Colonic mucosa (tissue), 4 donors: ENCODE measurements at regions of chr16 and their contacts with region 1.

Region 1: DNA sequence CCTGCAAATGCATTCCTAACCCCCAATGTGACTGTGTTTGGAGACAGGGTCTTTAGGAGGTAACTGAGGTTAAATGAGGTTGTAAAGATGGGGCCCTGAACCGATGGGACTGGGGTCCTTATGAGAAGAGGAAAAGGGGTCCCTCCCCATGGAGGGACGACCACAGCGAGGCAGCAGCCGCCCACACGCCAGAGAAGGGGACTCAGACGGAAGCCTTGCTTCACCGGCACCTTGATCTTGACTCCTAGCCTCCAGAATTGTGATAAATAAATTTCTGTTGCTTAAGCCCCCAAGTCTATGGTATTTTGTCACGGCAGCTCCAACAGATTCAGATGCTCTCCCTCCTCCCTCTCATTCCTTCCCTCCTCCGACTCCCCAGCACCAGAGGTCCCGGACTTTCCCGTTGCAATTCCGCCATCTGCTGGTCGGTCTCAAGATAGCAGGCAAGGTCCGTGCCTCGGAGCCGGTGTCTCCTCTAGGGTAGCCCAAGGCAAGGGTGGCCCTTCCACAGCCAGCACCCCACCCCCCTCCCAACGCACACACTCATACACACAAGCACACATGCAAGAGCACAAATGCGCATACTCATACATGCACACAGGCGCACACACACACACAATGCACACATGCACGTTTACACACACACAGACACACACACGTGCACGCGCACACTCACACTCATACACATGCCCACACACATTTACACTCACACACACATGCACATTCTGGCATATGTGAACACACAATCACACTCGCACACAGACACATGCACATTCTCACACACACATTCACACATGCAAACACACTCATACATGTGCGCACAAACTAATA is 23.1 kb upstream of the C16orf78 start:
- DNase-seq: peak; percentile 75
- H3K4me3 ChIP-seq: no peak overlapping the region
- H3K27ac ChIP-seq: no peak overlapping the region
- H3K4me1 ChIP-seq: no peaks in the 10 kb centered on the region
- H3K27me3 ChIP-seq: no peaks in the 10 kb centered on the region
- CTCF ChIP-seq: peak; percentile 71

Region 2: DNA sequence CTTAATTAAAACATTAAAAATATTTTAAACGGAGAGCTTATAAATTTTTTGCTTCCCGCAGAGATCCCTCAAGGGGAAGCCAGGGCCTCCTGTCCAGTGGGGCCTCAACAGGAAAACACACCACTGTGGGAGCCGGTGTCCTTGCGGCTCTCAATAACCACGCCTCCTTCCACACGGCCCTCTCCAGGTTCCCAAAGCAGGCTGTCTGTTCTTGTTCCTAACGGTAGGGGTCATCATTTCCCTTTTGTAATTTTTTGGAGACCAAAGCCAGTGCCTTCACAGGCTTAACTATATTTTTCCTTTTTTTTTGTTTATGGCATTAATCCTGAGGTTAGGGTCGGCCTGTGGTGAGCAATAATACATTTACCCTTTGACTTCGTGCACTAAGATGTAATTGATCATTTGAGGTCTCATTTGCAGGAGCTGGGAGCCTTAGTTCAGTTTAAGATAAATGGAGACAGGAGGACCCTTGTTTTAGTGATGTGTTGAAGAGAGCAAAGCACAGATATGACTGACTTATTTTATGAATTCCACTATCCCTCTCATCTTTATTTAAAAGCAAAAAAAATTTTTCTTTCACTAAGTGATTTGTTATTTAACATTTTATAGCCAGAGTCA is 663.0 kb before region 1 on chr16:
- intact Hi-C with region 1: loop called (anchors 2 kb)
- DNase-seq: peak; percentile 42
- H3K4me3 ChIP-seq: no peak overlapping the region
- H3K27ac ChIP-seq: no peak overlapping the region
- H3K4me1 ChIP-seq: no peaks in the 10 kb centered on the region
- H3K27me3 ChIP-seq: no peaks in the 10 kb centered on the region
- CTCF ChIP-seq: peak; percentile 59

Region 3: DNA sequence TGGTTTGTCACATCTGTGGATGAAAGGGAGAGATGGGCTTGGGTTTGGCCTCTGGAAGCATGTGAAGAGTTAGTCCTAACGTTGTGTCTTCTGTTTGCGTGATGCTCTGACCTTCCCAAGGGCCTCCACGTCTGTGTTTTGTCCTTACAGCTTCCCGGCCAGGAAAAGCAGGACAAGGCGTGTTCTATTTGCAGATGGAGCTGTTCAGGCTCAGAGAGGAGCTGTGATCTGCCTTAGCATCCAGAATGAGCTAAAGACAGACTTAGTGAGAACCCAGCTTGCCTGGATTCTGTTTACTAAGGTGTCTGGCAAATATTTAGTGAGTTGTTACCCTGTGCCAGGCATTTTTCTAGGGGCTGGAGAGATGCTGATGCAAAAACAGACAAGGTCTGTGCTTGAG is 351.0 kb before region 1 on chr16:
- intact Hi-C with region 1: loop called (anchors 5 kb)
- DNase-seq: no peak
- H3K4me3 ChIP-seq: no peak overlapping the region
- H3K27ac ChIP-seq: no peak overlapping the region
- H3K4me1 ChIP-seq: no peaks in the 10 kb centered on the region
- H3K27me3 ChIP-seq: no peaks in the 10 kb centered on the region
- CTCF ChIP-seq: no peak

Region 4: GRCh38 chr16:49055824-49056545 is 294.5 kb before region 1 on chr16:
- intact Hi-C with region 1: loop called (anchors 10 kb)
- DNase-seq: no peak
- H3K4me3 ChIP-seq: no peak overlapping the region
- H3K27ac ChIP-seq: no peak overlapping the region
- H3K4me1 ChIP-seq: no peaks in the 10 kb centered on the region
- H3K27me3 ChIP-seq: no peaks in the 10 kb centered on the region
- CTCF ChIP-seq: no peak